ENCODE measurements at regions of chr1 and their contacts with region 1.

Region 1: DNA sequence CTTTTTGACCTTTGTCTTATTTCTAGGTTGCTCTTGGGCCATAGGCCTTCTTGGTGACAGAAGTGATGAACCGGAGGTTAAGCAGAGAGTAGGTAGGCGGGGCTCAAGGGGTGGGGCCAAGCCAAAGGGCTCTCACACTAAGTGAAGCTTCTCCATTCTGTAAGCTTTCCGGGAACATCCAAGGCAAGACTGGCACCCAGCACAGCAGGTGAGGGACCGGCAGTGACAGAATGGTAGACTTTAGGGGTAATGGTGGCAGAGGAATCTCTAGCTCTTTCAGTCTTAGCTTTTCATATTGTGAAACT is at the start of gene TNFAIP8L2:
- DNase-seq: peak in 6 of 7 donors; percentile 35 to 69 (median 52)
- H3K4me3 ChIP-seq: peak within 1 kb of the TSS in 1 of 4 donors; percentile 30
- H3K27ac ChIP-seq: peak within 1 kb of the TSS in 1 of 5 donors; percentile 50
- H3K4me1 ChIP-seq: no peaks in the 10 kb centered on the region
- H3K27me3 ChIP-seq: no peaks in the 10 kb centered on the region
- CTCF ChIP-seq: no peak
- POLR2A ChIP-seq: no peak
- total RNA-seq, gene TNFAIP8L2: 1.4 to 18.3 (median 6.4) TPM

Region 2: DNA sequence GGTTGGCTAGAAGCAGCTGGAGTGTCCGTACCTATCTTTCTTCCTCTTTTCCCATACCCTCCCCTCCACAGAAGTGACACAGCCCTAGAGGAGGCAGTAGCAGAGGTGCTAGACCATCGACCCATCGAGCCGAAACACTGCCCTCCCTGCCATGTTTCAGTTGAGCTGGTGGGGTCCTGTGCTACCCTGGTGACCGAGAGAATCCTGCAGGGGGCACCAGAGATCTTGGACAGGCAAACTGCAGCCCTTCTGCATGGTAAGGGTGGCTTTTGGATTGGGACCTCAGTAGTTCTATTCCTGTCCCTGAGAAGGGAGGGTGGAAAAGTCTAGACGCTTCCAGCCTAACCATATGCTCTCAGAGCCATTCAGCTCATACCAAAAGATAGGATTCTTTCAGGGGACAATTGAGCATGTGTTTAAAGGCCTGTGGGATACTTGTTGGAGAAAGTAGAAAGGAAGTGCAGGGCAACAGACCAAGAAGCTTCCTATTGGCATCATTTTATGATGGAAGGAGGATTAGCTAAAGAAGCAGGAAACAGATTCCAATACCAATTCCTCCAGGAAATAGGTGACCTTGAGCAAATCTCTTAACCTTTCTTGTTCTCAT is 131.8 kb before region 1 on chr1:
- intact Hi-C with region 1: loop called in 1 of 2 experiments (anchors 10 kb)
- DNase-seq: peak; percentile 79 to 93 (median 88)
- H3K4me3 ChIP-seq: no peak overlapping the region
- H3K27ac ChIP-seq: peak overlapping the region in 1 of 5 donors; percentile 41
- H3K4me1 ChIP-seq: peaks cover 0 to 5% of the 10 kb centered on the region in 2 donors
- H3K27me3 ChIP-seq: no peaks in the 10 kb centered on the region
- CTCF ChIP-seq: peak; percentile 61 to 85 (median 74)
- POLR2A ChIP-seq: no peak

Region 3: GRCh38 chr1:151098126-151098525 is 58.3 kb before region 1 on chr1:
- intact Hi-C with region 1: loop called in 1 of 2 experiments (anchors 5 kb)
- DNase-seq: peak in 1 of 7 donors; percentile 3
- H3K4me3 ChIP-seq: no peak overlapping the region
- H3K27ac ChIP-seq: no peak overlapping the region
- H3K4me1 ChIP-seq: no peaks in the 10 kb centered on the region
- H3K27me3 ChIP-seq: no peaks in the 10 kb centered on the region
- CTCF ChIP-seq: no peak
- POLR2A ChIP-seq: no peak